Gastrocnemius medialis (tissue), 4 donors: ENCODE measurements at regions of chr22 and their contacts with region 1.

Region 1: GRCh38 chr22:29202212-29203192 is 3.2 kb upstream of the EMID1 start:
- DNase-seq: peak in 1 of 2 donors; percentile 41
- ATAC-seq: peak; percentile 25 to 37
- H3K4me3 ChIP-seq: no peak overlapping the region
- H3K27ac ChIP-seq: peak overlapping the region; percentile 12 to 53 (median 14)
- H3K4me1 ChIP-seq: peaks cover 0 to 4% of the 10 kb centered on the region in 2 donors
- H3K27me3 ChIP-seq: peaks cover 7 to 11% (median 7%) of the 10 kb centered on the region in 3 donors
- CTCF ChIP-seq: peak in 3 of 5 experiments; percentile 18 to 39 (median 26)
- POLR2A ChIP-seq: no peak

Region 2: GRCh38 chr22:29072193-29072978 is 130.1 kb before region 1 on chr22:
- in situ Hi-C with region 1: no loop called
- intact Hi-C with region 1: no loop called
- DNase-seq: peak; percentile 74 to 87
- ATAC-seq: peak; percentile 83 to 88
- H3K4me3 ChIP-seq: peak overlapping the region; percentile 48 to 73 (median 68)
- H3K27ac ChIP-seq: peak overlapping the region; percentile 16 to 60 (median 38)
- H3K4me1 ChIP-seq: peaks cover 21 to 37% of the 10 kb centered on the region in 2 donors
- H3K27me3 ChIP-seq: no peaks in the 10 kb centered on the region
- CTCF ChIP-seq: no peak
- POLR2A ChIP-seq: no peak

Region 3: GRCh38 chr22:29245637-29246385 is 43.3 kb after region 1 on chr22:
- in situ Hi-C with region 1: no loop called
- intact Hi-C with region 1: loop called (anchors 2 kb)
- DNase-seq: peak; percentile 53 to 63
- ATAC-seq: peak; percentile 76 to 91
- H3K4me3 ChIP-seq: no peak overlapping the region
- H3K27ac ChIP-seq: no peak overlapping the region
- H3K4me1 ChIP-seq: no peaks in the 10 kb centered on the region
- H3K27me3 ChIP-seq: no peaks in the 10 kb centered on the region
- CTCF ChIP-seq: peak; percentile 84 to 97 (median 92)
- POLR2A ChIP-seq: no peak